GM10248 (cell line): ENCODE measurements at regions of chr10 and their contacts with region 1.

Region 1: GRCh38 chr10:102503281-102504220 is at the start of gene SUFU:
- DNase-seq: peak; percentile 98
- CTCF ChIP-seq: peak; percentile 81

Region 2: GRCh38 chr10:102185811-102186527 is 317.6 kb before region 1 on chr10:
- CTCF ChIA-PET with region 1: no interaction called
- POLR2A ChIA-PET with region 1: no interaction called
- DNase-seq: no peak
- CTCF ChIP-seq: no peak

Region 3: DNA sequence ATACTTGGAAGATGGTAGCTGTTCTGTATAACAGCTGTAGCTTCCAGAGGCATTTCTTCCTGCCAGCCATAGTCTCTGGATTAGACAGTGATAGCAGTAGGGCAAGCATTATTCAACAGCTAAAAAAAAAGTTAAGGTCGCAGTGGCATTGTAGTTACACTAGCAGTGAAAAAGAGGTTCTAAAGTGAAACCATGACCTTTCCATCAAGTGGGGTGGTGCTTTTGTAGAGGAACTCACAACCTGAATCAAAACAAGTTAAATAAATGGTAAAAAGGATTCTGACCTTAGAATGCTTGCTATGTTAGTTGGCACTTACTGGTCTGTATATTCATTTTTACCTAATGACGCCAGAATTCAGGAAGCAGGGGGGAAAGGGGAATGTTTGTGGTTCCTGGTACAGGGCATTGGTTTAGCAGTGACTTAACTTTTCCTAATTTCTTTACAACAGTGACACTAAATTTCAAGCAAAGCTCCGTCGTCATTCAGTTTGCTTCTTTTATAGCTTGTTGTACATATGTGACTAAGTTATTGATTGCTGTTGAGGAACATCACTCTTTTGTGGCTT is 203.2 kb before region 1 on chr10:
- CTCF ChIA-PET with region 1: no interaction called
- POLR2A ChIA-PET with region 1: no interaction called
- DNase-seq: no peak
- CTCF ChIP-seq: no peak

Region 4: GRCh38 chr10:102322914-102323313 is 180.6 kb before region 1 on chr10:
- CTCF ChIA-PET with region 1: no interaction called
- POLR2A ChIA-PET with region 1: no interaction called
- DNase-seq: no peak
- CTCF ChIP-seq: no peak

Region 5: DNA sequence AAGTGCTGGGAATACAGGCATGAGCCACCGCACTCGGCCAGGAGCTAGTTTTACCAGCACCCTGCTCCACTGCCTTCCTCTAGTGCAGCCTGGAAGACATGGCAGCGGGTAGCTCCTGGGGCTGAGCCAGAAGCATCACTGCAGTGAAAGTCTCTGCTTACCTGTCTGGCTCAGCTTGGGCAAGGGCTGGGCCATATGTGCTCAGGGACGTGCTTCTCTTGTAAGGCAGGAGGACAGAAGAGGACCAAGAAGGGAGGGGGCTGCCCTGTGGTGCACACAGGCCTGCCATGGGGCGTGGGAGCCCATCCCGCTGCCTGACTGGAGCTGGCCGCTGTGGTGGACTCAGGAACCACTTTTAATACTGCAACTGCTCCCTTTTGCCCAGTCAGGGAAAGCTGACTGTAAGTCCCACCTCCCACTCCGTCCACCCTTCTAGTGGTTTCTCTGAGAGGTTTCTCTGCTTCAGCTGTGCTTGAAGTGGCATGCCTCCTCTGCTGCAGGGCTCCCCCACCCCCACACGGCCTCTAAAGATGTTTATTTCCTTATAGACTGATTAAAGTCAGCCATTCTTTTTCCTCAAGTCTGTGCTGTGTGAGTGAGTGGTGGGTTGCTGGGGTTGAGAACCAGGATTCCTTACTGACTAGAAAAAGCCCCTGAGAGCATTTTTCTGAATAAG is 26.9 kb before region 1 on chr10:
- CTCF ChIA-PET with region 1: interaction called, 10 read pairs
- POLR2A ChIA-PET with region 1: no interaction called
- DNase-seq: no peak
- CTCF ChIP-seq: no peak

Region 6: DNA sequence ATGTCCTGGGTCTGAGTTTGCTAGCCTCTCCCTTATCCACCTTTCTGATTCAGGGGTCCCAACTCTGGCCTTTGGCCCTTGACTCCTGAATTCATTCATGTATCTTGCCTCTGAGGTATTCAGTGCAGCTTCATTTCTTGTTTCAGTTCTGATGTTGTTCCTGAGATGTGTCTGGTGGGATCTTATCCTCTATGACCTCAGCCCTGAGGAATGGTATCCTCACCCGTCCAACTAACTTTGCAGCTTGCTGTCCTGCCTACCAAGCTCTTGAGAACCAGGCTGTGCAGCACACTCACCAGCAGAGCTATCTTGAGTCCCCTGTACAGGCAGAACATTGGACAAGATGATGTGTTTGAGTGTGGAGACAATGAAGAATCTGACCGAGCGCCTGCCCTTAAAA is 14.0 kb after region 1 on chr10:
- CTCF ChIA-PET with region 1: interaction called, 20 read pairs
- POLR2A ChIA-PET with region 1: no interaction called
- DNase-seq: no peak
- CTCF ChIP-seq: no peak

Region 7: GRCh38 chr10:103215601-103216000 is 712.0 kb after region 1 on chr10:
- CTCF ChIA-PET with region 1: no interaction called
- POLR2A ChIA-PET with region 1: no interaction called
- DNase-seq: no peak
- CTCF ChIP-seq: no peak